Mammary epithelial cell (primary cell): ENCODE measurements at regions of chr18 and their contacts with region 1.

Region 1: GRCh38 chr18:67515945-67516538 is 478 bp downstream of the DSEL start:
- DNase-seq: peak; percentile 89
- H3K4me3 ChIP-seq: peak overlapping the region; percentile 75 to 96 (median 91)
- H3K27ac ChIP-seq: peak overlapping the region; percentile 67
- H3K4me1 ChIP-seq: peaks cover 8% of the 10 kb centered on the region
- H3K27me3 ChIP-seq: no peaks in the 10 kb centered on the region
- CTCF ChIP-seq: peak; percentile 67 to 89

Region 2: DNA sequence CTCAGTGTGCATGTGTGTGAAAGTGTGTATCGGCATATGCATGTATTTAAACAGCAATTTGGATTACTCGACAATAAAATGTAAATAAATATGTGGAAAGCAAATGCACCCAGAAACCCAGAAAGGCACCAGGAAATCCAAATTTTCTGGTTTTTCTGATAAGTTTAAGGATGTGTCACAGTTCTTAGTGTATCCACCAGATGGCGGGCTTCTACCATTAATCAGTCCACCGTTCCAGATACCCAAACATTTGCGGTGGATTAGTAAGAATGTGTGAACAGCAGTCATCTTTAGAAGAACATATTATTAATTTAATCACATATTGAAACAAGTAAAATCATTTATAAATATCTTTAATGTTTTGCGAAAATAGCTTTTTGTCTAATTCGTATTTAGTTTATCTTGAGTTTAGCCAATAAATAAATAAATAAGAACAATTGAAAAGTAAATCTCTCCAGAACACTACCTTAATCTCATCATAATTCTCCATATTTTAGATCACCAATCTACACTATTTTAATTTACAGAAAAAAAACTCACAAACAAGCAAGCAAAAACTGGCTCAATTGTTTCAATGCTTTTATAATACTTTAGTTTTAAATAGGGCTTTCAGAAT is 298.4 kb before region 1 on chr18:
- CTCF ChIA-PET with region 1: no interaction called
- dilution Hi-C with region 1: no loop called
- in situ Hi-C with region 1: loop called in 1 of 2 experiments (anchors 10 kb)
- intact Hi-C with region 1: loop called (anchors 2 kb)
- DNase-seq: peak; percentile 39
- H3K4me3 ChIP-seq: no peak overlapping the region
- H3K27ac ChIP-seq: no peak overlapping the region
- H3K4me1 ChIP-seq: no peaks in the 10 kb centered on the region
- H3K27me3 ChIP-seq: no peaks in the 10 kb centered on the region
- CTCF ChIP-seq: peak; percentile 51 to 66

Region 3: DNA sequence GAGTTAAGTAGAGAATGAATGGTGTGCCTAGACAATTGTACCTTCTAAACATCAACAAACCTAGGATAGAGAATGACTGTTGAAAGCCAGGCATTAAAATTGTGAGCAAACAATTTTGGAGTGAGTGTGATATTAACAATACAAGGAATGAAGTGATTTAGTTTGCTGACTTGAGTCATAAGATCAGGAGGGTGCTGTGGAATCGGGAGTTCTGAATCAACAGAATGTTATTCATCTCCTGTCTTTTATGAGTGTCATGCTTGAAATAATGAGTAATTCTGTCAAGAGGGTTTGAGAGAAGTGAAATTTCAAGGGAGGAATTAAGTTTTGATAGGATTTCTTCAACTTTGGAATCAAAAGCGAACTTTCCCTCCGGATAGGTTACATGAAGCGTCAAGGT is 214.8 kb after region 1 on chr18:
- CTCF ChIA-PET with region 1: no interaction called
- dilution Hi-C with region 1: no loop called
- in situ Hi-C with region 1: no loop called
- intact Hi-C with region 1: loop called (anchors 10 kb)
- DNase-seq: peak; percentile 91
- H3K4me3 ChIP-seq: no peak overlapping the region
- H3K27ac ChIP-seq: peak overlapping the region; percentile 89
- H3K4me1 ChIP-seq: peaks cover 34% of the 10 kb centered on the region
- H3K27me3 ChIP-seq: no peaks in the 10 kb centered on the region
- CTCF ChIP-seq: no peak

Region 4: DNA sequence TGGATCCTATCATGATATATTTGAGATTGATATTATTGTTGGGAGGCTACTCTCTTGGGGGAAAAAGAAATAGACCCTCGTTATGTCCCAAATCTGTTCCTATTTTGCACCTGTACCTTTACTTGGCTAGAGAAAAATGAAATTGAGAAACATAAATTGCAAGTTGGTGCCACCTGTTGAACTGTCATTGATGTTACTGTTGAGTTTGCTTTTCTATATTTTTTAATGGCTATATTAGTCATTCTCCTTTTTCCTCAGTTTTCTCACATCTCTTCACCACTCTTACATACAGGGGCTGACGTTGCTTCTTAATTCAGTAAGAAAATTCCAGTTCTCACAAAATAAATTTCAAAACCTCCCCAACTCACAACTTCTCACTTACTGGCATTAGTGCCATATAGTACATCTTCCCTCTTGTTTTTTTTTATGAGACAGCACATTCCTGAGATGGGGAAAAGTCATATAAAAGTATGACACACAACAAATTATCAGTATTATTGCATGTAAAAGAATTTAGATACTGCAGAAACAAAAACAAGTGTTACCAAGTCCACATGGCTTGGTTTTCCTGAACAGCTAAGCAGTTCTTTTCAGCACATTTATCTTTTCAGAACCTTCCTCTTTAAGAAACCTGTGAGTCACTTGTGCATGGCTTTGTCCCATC is 348.8 kb after region 1 on chr18:
- CTCF ChIA-PET with region 1: interaction called, 16 read pairs
- dilution Hi-C with region 1: no loop called
- in situ Hi-C with region 1: no loop called
- intact Hi-C with region 1: no loop called
- DNase-seq: peak; percentile 5
- H3K4me3 ChIP-seq: no peak overlapping the region
- H3K27ac ChIP-seq: no peak overlapping the region
- H3K4me1 ChIP-seq: no peaks in the 10 kb centered on the region
- H3K27me3 ChIP-seq: no peaks in the 10 kb centered on the region
- CTCF ChIP-seq: no peak

Region 5: DNA sequence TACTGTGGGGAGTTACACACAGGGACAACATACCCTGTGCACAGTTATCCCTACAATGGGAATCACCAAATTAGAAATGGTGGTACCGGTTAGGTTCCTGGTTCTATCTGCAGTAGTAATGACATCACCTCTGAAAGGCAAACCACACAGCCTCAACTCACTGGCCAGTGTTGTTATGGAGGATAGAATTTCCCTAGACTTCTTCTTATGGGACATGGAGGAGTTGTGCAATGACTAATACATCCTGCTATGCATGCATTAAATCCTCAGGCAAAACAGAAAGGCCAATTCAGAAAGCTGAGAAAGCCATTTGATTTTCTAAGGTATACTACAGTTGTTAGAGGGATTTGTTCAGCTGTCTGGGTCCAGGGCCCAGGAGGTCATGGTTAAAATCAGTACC is 759.6 kb after region 1 on chr18:
- CTCF ChIA-PET with region 1: no interaction called
- dilution Hi-C with region 1: no loop called
- in situ Hi-C with region 1: no loop called
- intact Hi-C with region 1: loop called (anchors 5 kb)
- DNase-seq: peak; percentile 77
- H3K4me3 ChIP-seq: no peak overlapping the region
- H3K27ac ChIP-seq: no peak overlapping the region
- H3K4me1 ChIP-seq: peaks cover 11% of the 10 kb centered on the region
- H3K27me3 ChIP-seq: no peaks in the 10 kb centered on the region
- CTCF ChIP-seq: no peak

Region 6: DNA sequence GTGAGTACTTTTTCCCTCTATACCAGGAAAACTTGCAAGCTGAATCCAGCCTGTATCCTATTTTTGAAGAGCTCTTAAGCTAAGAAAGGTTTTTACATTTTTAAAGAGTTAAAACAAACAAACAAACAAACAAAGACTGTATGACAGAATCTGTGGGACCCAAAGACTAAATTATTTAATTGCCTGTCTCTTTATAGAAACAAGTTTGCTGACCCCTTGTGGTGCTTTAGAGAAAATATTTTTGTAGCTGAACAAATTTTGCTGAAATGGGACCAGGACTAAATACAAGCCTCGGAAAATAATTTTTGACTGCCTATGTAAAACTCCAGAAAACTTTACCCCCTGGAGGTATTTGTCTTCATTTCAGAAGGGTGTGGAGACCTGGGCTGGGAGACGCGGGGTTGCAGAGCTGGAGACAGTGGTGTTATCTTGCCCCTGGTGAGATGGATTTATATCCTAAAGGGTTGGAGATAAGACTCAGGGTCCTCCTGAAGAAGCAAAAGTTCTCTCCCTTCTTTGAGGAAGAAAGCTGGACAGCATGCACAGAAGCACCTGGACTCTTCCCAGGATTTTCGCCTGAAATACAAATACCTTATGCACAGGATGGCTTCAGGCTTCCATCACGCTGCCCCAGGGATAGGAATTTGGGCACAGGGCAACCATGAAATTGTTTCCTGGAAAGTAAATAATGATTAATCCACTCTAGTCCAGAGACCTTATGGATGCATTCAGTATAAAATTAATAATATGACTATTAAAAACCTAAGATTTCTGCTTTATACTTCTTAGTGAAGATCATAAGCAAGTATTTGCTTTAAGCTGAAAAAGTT is 1144.5 kb after region 1 on chr18:
- CTCF ChIA-PET with region 1: no interaction called
- dilution Hi-C with region 1: no loop called
- in situ Hi-C with region 1: no loop called
- intact Hi-C with region 1: loop called (anchors 1 kb)
- DNase-seq: peak; percentile 27
- H3K4me3 ChIP-seq: no peak overlapping the region
- H3K27ac ChIP-seq: no peak overlapping the region
- H3K4me1 ChIP-seq: no peaks in the 10 kb centered on the region
- H3K27me3 ChIP-seq: no peaks in the 10 kb centered on the region
- CTCF ChIP-seq: peak; percentile 51 to 58